Heart left ventricle (tissue), 16 donors: ENCODE measurements at regions of chr1 and their contacts with region 1.

Region 1: DNA sequence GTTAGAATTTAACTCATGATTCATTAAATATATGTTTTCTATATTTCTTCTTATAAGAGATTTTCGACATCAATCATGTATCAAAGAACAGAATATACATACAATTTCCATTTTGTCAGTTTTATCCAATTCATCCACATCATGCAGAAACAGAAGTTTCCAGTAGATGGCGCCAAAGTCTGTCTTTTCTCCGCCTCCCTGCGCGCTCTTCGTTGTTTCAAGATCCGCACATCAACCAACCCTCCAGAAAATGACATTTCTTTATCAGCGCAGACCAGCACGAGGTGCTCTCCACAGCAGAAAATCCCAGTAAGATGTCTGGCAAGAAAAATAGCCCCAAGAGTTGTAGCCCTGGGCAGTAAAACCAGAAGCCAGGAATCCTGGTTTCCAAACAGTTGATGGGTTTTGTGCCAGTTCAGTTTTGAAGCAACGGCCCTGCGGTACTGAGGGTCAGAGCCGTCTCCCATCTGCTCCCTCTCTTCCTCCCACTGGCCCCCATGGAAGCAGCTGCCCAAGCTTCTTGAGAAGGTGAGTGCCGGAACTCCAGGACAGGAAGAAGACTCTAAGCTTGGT is 38.6 kb upstream of the GPR137B start:
- DNase-seq: peak in 3 of 5 donors; percentile 37 to 50 (median 42)
- ATAC-seq: peak in 2 of 4 donors; percentile 31 to 60
- H3K4me3 ChIP-seq: no peak overlapping the region
- H3K27ac ChIP-seq: no peak overlapping the region
- H3K4me1 ChIP-seq: peaks cover 0 to 5% (median 0%) of the 10 kb centered on the region in 12 donors
- H3K27me3 ChIP-seq: no peaks in the 10 kb centered on the region
- CTCF ChIP-seq: peak; percentile 75 to 90 (median 81)
- POLR2A ChIP-seq: no peak

Region 2: GRCh38 chr1:236281654-236282424 is 178.1 kb after region 1 on chr1 and contains the start of gene ERO1B:
- intact Hi-C with region 1: loop called in 2 of 10 experiments (anchors 10 kb)
- DNase-seq: peak; percentile 97 to 99 (median 98)
- ATAC-seq: peak; percentile 98 to 100 (median 100)
- H3K4me3 ChIP-seq: peak within 1 kb of the TSS; percentile 80 to 100 (median 94)
- H3K27ac ChIP-seq: peak within 1 kb of the TSS; percentile 43 to 91 (median 85)
- H3K4me1 ChIP-seq: peaks cover 0 to 18% (median 6%) of the 10 kb centered on the region in 12 donors
- H3K27me3 ChIP-seq: peaks cover 0 to 6% (median 0%) of the 10 kb centered on the region in 9 donors
- CTCF ChIP-seq: peak in 2 of 12 donors; percentile 8 to 27
- POLR2A ChIP-seq: peak; percentile 88 to 99
- total RNA-seq, gene ERO1B: 6.1 to 11.4 (median 6.9) TPM

Region 3: DNA sequence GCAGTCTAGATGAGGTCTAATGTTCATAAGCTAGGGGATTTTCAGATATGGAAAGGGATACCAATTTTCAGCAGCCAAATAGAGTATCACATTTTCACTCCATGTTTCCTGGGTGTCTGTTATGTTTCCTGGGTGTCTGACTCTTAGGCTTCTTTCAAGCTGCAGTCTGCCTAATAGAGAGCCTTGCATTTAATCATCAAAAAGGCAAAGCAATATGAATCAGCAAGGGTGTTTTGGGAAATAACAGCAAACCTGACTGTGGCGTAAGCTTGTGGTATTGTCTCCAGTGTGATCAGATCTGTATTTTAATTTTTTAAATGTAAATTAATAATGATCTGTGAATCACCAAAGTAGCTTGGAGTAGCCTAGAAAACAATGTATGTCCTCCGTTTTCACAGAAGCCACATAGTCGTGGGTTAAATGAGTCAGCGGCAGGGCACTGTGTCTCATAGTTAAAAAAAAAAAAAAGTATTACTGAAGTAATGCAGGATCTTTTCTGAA is 430.5 kb after region 1 on chr1:
- intact Hi-C with region 1: loop called in 8 of 10 experiments (anchors 5 to 10 kb)
- DNase-seq: no peak
- ATAC-seq: no peak
- H3K4me3 ChIP-seq: no peak overlapping the region
- H3K27ac ChIP-seq: no peak overlapping the region
- H3K4me1 ChIP-seq: peaks cover 0 to 41% (median 16%) of the 10 kb centered on the region in 12 donors
- H3K27me3 ChIP-seq: no peaks in the 10 kb centered on the region
- CTCF ChIP-seq: no peak
- POLR2A ChIP-seq: no peak

Region 4: DNA sequence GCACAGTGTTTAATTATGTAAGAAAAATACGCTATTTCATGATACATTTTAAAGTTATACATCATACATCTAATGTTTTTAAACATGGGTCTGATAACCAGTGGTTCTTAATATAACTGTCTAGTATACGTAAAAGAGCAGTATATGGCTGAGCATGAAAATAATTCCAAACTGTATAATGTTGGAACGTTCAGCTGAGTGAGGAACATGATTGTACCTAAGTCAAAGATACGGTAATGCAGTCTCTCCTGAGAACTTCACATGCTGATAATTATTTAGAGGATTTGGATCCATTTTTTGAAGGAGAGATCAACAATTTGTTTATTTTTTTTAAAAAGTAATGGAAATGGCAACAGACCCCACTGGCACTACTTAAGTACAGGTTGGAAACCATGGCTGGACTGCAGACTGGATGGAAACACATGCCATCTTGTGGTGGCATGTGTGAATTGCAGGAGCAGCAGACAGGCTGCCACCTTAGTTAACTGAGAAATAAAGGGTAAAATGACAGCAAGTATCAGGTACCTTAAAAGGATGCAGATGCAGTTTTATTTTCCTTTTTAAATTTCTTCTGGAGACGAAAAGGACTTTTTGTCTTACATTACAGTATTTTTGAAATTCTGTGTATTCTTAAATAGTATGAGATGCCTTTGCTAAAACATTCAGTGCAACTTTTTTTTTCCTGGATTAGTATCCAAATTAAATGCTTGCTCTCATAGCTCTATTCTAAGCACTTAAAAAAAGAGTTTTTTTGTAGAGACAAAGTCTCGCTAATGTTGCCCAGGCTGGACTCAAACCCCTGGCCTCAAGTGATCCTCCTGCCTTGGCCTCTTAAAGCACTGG is 765.1 kb after region 1 on chr1:
- intact Hi-C with region 1: loop called in 2 of 10 experiments (anchors 5 to 10 kb)
- DNase-seq: no peak
- ATAC-seq: no peak
- H3K4me3 ChIP-seq: no peak overlapping the region
- H3K27ac ChIP-seq: no peak overlapping the region
- H3K4me1 ChIP-seq: peaks cover 0 to 39% (median 12%) of the 10 kb centered on the region in 12 donors
- H3K27me3 ChIP-seq: no peaks in the 10 kb centered on the region
- CTCF ChIP-seq: peak; percentile 63 to 91 (median 78)
- POLR2A ChIP-seq: no peak